ENCODE measurements at regions of chr1 and their contacts with region 1.

Region 1: GRCh38 chr1:19220991-19221390 is 10.9 kb upstream of the UBR4 start:
- DNase-seq: peak; percentile 35
- H3K4me3 ChIP-seq: no peak overlapping the region
- H3K27ac ChIP-seq: peak overlapping the region; percentile 37
- H3K4me1 ChIP-seq: peaks cover 5% of the 10 kb centered on the region
- H3K27me3 ChIP-seq: no peaks in the 10 kb centered on the region
- CTCF ChIP-seq: no peak

Region 2: DNA sequence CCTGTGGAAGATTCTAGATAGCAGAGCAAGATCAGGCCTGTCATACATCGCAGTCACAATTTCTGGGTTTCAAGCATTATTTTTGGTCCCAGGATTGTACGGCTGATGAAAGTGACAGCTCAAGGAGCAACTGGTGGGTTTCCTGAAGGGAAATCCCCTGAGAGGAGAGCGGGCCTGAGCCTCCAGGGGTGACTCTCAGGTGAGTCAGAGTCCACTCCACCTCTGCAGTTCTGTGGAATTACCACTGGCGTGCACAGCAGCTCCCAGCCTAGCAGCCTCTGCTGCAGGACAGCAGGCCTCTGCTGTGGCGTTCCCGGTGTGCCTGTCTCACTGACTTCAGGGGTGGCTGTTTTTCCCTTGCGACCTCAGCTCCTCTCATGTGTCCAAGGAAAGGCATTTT is 115.6 kb after region 1 on chr1:
- CTCF ChIA-PET with region 1: no interaction called
- POLR2A ChIA-PET with region 1: no interaction called
- intact Hi-C with region 1: no loop called
- DNase-seq: no peak
- H3K4me3 ChIP-seq: no peak overlapping the region
- H3K27ac ChIP-seq: no peak overlapping the region
- H3K4me1 ChIP-seq: no peaks in the 10 kb centered on the region
- H3K27me3 ChIP-seq: no peaks in the 10 kb centered on the region
- CTCF ChIP-seq: no peak

Region 3: GRCh38 chr1:19479351-19480120 is 258.5 kb after region 1 on chr1:
- CTCF ChIA-PET with region 1: no interaction called
- POLR2A ChIA-PET with region 1: interaction called, 19 read pairs
- intact Hi-C with region 1: no loop called
- DNase-seq: no peak
- H3K4me3 ChIP-seq: no peak overlapping the region
- H3K27ac ChIP-seq: no peak overlapping the region
- H3K4me1 ChIP-seq: peaks cover 14% of the 10 kb centered on the region
- H3K27me3 ChIP-seq: no peaks in the 10 kb centered on the region
- CTCF ChIP-seq: no peak